H1 (cell line): ENCODE measurements at regions of chr19 and their contacts with region 1.

Region 1: DNA sequence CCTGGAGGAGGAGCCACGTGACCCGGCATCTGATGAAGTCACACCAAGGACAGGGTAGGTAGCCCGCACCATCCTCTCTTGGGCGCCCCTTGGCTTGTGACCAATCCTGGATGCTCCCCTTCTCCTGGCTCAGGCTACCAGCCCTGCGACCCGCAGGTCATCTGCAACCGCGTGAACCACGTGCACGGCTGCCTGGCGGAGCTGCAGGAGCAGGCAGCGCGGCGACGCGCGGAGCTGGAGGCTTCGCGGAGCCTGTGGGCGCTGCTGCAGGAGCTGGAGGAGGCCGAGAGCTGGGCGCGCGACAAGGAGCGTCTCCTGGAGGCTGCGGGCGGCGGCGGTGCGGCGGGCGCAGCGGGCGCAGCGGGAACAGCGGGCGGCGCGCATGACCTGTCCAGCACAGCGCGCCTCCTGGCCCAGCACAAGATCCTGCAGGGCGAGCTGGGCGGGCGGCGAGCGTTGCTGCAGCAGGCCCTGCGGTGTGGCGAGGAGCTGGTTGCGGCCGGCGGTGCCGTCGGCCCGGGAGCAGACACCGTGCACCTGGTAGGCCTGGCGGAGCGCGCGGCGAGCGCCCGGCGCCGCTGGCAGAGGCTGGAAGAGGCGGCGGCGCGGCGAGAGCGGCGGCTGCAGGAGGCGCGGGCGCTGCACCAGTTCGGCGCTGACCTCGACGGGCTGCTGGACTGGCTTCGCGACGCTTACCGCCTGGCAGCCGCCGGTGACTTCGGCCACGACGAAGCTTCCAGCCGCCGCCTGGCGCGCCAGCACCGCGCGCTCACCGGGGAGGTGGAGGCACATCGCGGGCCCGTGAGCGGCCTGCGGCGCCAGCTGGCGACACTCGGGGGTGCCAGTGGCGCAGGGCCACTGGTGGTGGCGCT is 45.9 kb downstream of the SPTBN4 start:
- DNase-seq: peak in 1 of 2 experiments; percentile 77
- H3K4me3 ChIP-seq: peak overlapping the region; percentile 3 to 54 (median 20); a peak in 3 of 8 replicates
- H3K27ac ChIP-seq: no peak overlapping the region
- H3K4me1 ChIP-seq: peaks cover 0 to 4% (median 2%) of the 10 kb centered on the region in 4 experiments; a peak in 2 of 7 replicates
- H3K27me3 ChIP-seq: peaks cover 30 to 52% (median 44%) of the 10 kb centered on the region in 4 experiments
- CTCF ChIP-seq: 0 out of 4 replicates have a peak, but pooled peaks of 1 of the 3 experiments have one; percentile 22
- EP300 ChIP-seq: peak in 1 of 2 experiments; percentile 21; a peak in 1 of 3 replicates
- POLR2A ChIP-seq: no peak
- RAD21 ChIP-seq: no peak

Region 2: GRCh38 chr19:40523322-40524047 is 10.8 kb after region 1 on chr19:
- CTCF ChIA-PET with region 1: interaction called, 11 read pairs
- POLR2A ChIA-PET with region 1: interaction called, 3 read pairs
- DNase-seq: peak in 1 of 2 experiments; percentile 87
- H3K4me3 ChIP-seq: no peak overlapping the region
- H3K27ac ChIP-seq: no peak overlapping the region
- H3K4me1 ChIP-seq: peaks cover 0 to 4% (median 1%) of the 10 kb centered on the region in 4 experiments; a peak in 3 of 7 replicates
- H3K27me3 ChIP-seq: peaks cover 17 to 32% (median 27%) of the 10 kb centered on the region in 4 experiments
- CTCF ChIP-seq: peak; percentile 91 to 99 (median 98)
- EP300 ChIP-seq: no peak
- POLR2A ChIP-seq: no peak
- RAD21 ChIP-seq: peak; percentile 67 to 78